Vagina (tissue), 2 donors: ENCODE measurements at regions of chr19 and their contacts with region 1.

Region 1: GRCh38 chr19:13262450-13262849 is 112.2 kb downstream of the IER2 start:
- DNase-seq: no peak
- H3K4me3 ChIP-seq: no peak overlapping the region
- H3K27ac ChIP-seq: no peak overlapping the region
- H3K4me1 ChIP-seq: no peaks in the 10 kb centered on the region
- H3K27me3 ChIP-seq: no peaks in the 10 kb centered on the region
- CTCF ChIP-seq: peak; percentile 53 to 77 (median 67)
- POLR2A ChIP-seq: no peak

Region 2: GRCh38 chr19:11626252-11626651 is 1636.2 kb before region 1 on chr19:
- intact Hi-C with region 1: loop called (anchors 5 kb)
- DNase-seq: no peak
- H3K4me3 ChIP-seq: no peak overlapping the region
- H3K27ac ChIP-seq: no peak overlapping the region
- H3K4me1 ChIP-seq: peaks cover 23% of the 10 kb centered on the region
- H3K27me3 ChIP-seq: no peaks in the 10 kb centered on the region
- CTCF ChIP-seq: no peak
- POLR2A ChIP-seq: no peak

Region 3: DNA sequence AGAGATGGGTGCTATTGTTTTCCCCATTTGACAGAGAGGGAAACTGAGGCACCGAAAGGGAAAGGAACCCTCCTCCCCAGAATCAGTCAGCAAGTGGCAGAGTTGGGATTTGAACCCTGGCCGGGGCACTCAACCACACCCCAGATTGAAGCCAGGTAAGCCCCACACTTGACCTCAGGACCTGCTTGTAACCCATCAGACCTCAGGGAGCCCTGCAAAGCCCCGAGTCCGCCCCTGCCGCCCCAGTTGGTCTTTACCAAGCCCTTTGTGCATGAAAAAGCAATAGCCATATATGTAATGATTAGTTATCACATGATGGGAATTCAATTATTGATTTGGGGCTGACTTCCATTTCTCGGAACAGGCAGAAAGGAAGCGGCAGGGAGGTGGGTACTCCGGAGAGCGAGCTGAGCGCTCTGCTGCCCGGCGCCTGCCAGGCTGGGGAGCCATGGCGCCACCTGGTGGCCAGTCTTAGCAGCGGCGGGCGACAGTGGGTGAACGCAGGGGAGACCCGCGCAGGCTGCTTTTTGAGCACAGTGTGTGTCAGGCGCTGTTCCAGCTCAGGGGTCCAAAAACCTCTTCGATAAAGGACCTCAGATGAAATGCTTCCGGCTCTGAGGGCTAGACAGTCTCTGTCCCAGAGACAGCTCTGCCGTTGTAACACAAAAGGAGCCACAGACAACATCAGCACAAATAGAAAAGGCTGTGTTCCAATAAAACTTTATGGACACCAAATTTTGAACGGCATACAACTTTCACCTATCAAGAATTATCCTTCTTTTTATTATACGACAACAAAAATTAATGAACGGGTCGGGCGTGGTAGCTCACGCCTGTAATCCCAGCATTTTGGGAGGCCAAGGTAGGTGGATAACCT is 326.7 kb after region 1 on chr19:
- intact Hi-C with region 1: no loop called
- DNase-seq: no peak
- H3K4me3 ChIP-seq: no peak overlapping the region
- H3K27ac ChIP-seq: no peak overlapping the region
- H3K4me1 ChIP-seq: no peaks in the 10 kb centered on the region
- H3K27me3 ChIP-seq: no peaks in the 10 kb centered on the region
- CTCF ChIP-seq: peak; percentile 70 to 91 (median 87)
- POLR2A ChIP-seq: no peak